MCF 10A (cell line): ENCODE measurements at regions of chr20 and their contacts with region 1.

Region 1: GRCh38 chr20:32091888-32092346 is 17.6 kb upstream of the TM9SF4 start:
- DNase-seq: peak; percentile 77
- H3K4me3 Mint-ChIP-seq: no peak overlapping the region
- H3K27ac Mint-ChIP-seq: no peak overlapping the region
- H3K4me1 Mint-ChIP-seq: no peaks in the 10 kb centered on the region
- H3K27me3 Mint-ChIP-seq: peaks cover 40% of the 10 kb centered on the region
- CTCF ChIP-seq: peak; percentile 97

Region 2: DNA sequence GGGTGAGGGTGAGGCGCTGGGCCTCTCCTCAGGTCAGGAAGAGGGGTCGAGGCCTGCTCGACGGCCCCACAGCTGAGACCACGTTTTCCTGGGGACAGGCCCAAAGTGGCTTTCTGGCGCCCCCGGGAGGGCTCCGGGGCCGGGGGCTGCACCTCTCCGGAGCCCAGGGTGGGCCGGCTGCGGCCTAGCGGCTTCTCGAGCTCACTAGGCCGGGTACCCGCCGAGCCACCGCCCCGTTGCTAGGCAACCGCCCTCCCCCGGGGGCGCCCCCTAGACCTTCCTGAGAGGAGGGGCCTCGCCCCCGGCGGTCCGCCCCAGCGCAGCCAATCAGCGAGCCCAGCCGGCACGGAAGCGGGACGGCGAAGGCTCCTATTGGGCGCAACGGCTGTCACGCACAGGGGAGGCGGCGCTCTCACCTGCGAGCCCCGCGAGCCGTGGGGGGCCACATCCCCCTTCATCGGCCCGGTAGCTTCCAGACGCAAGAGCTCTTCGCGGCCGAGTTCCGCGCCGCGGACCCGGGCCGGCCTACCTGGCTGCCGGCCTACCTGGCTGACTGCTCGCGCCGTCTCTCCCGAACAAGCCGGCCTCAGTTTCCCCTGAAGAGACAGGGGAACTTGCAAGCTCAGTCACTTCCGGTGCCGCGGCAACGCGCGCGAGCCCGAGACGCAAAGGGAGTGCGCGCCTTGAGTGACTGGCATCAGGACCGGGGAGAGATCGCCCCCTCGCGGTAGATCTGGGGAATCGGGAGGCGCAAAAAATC is 368.4 kb before region 1 on chr20:
- CTCF ChIA-PET with region 1: no interaction called
- POLR2A ChIA-PET with region 1: no interaction called
- intact Hi-C with region 1: no loop called
- DNase-seq: peak; percentile 96
- H3K4me3 Mint-ChIP-seq: peak overlapping the region; percentile 91
- H3K27ac Mint-ChIP-seq: peak overlapping the region; percentile 93
- H3K4me1 Mint-ChIP-seq: peaks cover 40% of the 10 kb centered on the region
- H3K27me3 Mint-ChIP-seq: no peaks in the 10 kb centered on the region
- CTCF ChIP-seq: peak; percentile 82

Region 3: DNA sequence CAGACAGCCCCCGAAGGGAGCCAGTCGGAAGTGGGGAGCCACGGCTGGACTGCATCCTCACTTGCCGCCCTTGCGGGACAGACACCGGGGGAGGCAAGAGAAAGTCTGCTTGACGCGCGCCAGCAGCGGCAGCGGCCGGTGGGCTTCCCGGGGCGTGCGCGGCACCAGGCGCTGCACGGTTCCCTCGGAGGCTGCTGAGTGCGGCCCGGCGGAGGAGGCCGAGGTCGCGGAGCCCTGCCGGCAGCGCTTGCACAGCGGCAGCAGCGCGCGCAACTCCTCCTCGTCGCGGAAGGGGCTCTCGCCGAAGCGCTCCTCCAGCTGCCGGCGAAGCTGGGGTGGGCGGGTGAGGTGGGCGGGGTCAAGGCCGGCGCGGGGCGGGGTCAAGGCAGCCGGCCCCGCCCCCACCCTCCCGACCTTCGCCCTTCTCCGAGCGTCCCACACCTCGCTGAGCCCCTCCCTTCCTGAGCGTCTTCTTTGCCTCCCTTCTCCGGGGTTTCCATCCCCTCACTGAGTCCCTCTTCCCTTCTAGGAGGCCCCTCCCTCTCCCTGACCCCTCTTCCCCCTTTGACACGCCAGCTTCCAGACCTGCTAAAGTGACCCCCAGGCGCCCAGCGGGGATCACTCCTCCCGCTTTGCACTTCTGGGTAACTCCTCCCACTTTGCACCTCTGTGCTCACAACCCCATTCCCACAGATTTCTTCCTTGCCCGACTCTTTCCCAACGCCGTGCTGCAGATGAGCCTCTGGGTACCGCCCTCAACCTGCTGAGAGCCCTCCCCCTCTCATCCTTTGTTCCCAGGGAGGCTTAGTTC is 230.4 kb before region 1 on chr20:
- CTCF ChIA-PET with region 1: interaction called, 11 read pairs
- POLR2A ChIA-PET with region 1: no interaction called
- intact Hi-C with region 1: loop called (anchors 2 kb)
- DNase-seq: no peak
- H3K4me3 Mint-ChIP-seq: peak overlapping the region; percentile 54
- H3K27ac Mint-ChIP-seq: no peak overlapping the region
- H3K4me1 Mint-ChIP-seq: peaks cover 5% of the 10 kb centered on the region
- H3K27me3 Mint-ChIP-seq: peaks cover 40% of the 10 kb centered on the region
- CTCF ChIP-seq: no peak

Region 4: DNA sequence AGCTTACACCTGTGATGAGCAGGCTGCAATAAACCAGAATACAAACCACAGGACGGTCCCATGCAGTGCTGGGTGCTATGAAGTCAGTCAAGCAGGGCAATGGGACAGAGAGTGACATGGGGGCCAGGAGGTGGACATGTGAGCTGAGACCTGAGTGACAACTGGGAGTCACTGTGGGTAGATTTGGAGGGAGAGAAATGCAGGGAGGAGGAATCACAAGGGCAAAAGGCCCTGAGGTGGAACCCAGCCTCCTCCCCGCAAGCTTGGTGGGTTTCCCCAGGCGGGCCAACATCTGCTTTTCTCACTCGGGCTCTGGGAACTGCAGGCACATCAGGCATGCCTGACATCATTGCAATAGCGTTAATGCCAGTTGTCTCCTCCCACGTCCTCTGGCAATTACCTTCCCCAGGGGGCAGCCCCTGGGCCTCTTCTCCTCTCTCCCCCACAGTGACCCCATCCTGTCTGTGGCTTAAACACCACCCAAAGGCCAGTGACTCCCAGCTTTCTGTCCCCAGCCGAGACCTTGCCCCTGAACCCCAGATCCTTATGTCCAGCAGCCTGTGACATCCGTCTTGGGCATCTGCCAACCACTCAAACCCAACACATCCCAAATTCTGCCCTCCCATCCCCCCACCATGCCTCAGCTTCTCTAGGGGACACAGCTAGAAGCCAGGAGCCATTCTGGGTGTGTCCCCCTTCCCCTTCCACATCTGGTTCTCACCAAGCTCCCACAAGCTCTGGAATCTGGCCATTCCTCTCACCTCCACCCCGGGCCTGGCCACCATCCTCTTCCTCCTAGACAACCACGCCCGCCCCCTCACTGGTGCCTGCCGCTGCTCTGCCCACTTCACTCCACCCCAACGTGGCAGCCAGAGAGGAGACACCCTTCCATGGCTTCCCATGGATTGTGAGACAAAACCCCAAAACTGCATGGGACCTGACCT is 168.3 kb before region 1 on chr20:
- CTCF ChIA-PET with region 1: no interaction called
- POLR2A ChIA-PET with region 1: no interaction called
- intact Hi-C with region 1: no loop called
- DNase-seq: no peak
- H3K4me3 Mint-ChIP-seq: no peak overlapping the region
- H3K27ac Mint-ChIP-seq: no peak overlapping the region
- H3K4me1 Mint-ChIP-seq: peaks cover 6% of the 10 kb centered on the region
- H3K27me3 Mint-ChIP-seq: peaks cover 52% of the 10 kb centered on the region
- CTCF ChIP-seq: no peak

Region 5: GRCh38 chr20:32052090-32052777 is 39.7 kb before region 1 on chr20 and contains the start of gene HCK:
- CTCF ChIA-PET with region 1: interaction called, 14 read pairs
- POLR2A ChIA-PET with region 1: no interaction called
- intact Hi-C with region 1: no loop called
- DNase-seq: no peak
- H3K4me3 Mint-ChIP-seq: no peak within 1 kb of the TSS
- H3K27ac Mint-ChIP-seq: no peak within 1 kb of the TSS
- H3K4me1 Mint-ChIP-seq: no peaks in the 10 kb centered on the region
- H3K27me3 Mint-ChIP-seq: peaks cover 66% of the 10 kb centered on the region
- CTCF ChIP-seq: no peak
- total RNA-seq, gene HCK: not detected in 2 replicates

Region 6: GRCh38 chr20:32079655-32080109 is 12.2 kb before region 1 on chr20:
- CTCF ChIA-PET with region 1: interaction called, 69 read pairs
- POLR2A ChIA-PET with region 1: interaction called, 3 read pairs
- intact Hi-C with region 1: no loop called
- DNase-seq: no peak
- H3K4me3 Mint-ChIP-seq: no peak overlapping the region
- H3K27ac Mint-ChIP-seq: no peak overlapping the region
- H3K4me1 Mint-ChIP-seq: no peaks in the 10 kb centered on the region
- H3K27me3 Mint-ChIP-seq: peaks cover 88% of the 10 kb centered on the region
- CTCF ChIP-seq: no peak

Region 7: GRCh38 chr20:32119734-32120133 is 27.8 kb after region 1 on chr20:
- CTCF ChIA-PET with region 1: interaction called, 10 read pairs
- POLR2A ChIA-PET with region 1: no interaction called
- intact Hi-C with region 1: no loop called
- DNase-seq: no peak
- H3K4me3 Mint-ChIP-seq: no peak overlapping the region
- H3K27ac Mint-ChIP-seq: no peak overlapping the region
- H3K4me1 Mint-ChIP-seq: peaks cover 8% of the 10 kb centered on the region
- H3K27me3 Mint-ChIP-seq: no peaks in the 10 kb centered on the region
- CTCF ChIP-seq: no peak